AG04450 (cell line): ENCODE measurements at regions of chr10 and their contacts with region 1.

Region 1: DNA sequence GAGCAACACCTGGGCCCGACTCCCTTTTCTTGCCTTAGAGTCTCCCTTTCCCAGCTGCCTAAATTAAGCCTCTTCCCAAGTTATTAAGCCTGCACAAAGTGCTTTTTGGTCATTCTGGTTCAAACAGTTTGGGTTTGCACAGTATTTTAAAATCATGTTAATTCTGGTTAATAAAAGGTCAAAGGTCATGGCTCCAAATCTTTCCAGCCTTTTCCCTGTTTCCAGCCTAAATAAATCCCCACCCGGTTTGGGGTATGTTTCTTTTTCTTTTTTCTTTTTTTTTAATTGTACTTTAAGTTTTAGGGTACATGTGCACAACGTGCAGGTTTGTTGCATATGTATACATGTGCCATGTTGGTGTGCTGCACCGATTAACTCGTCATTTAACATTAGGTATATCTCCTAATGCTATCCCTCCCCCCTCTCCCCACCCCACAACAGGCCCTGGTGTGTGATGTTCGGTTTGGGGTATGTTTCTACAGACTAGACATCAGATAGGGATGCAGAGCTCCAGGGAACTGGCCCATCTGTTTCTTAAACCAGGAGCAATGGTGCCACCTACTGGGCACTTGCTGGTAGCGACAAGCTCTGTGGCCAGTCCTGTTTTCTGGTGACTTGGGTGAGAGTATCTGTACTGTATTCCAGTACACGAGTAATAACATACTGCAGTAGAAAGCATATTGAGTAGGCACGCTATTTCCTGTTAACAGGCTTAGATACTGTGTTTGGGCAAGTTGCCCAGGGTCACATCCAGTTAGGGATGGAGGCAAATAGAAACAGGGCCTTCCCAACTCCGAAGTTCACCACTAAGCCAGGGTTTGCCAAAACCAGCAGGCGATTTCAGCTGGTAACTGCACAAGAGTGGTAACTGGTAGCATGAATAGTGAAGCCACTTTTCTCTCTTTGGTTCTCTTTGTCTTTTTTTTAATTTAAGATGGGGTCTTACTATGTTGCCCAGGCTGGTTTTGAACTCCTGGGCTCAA is 60.6 kb upstream of the TRIM8 start:
- DNase-seq: peak; percentile 85
- H3K4me3 ChIP-seq: no peak overlapping the region
- H3K27ac ChIP-seq: no peak overlapping the region
- H3K27me3 ChIP-seq: no peaks in the 10 kb centered on the region
- CTCF ChIP-seq: peak; percentile 86

Region 2: GRCh38 chr10:102175415-102175814 is 408.3 kb before region 1 on chr10:
- CTCF ChIA-PET with region 1: interaction called, 11 read pairs
- POLR2A ChIA-PET with region 1: no interaction called
- DNase-seq: peak; percentile 37
- H3K4me3 ChIP-seq: no peak overlapping the region
- H3K27ac ChIP-seq: peak overlapping the region; percentile 33
- H3K27me3 ChIP-seq: no peaks in the 10 kb centered on the region
- CTCF ChIP-seq: no peak

Region 3: DNA sequence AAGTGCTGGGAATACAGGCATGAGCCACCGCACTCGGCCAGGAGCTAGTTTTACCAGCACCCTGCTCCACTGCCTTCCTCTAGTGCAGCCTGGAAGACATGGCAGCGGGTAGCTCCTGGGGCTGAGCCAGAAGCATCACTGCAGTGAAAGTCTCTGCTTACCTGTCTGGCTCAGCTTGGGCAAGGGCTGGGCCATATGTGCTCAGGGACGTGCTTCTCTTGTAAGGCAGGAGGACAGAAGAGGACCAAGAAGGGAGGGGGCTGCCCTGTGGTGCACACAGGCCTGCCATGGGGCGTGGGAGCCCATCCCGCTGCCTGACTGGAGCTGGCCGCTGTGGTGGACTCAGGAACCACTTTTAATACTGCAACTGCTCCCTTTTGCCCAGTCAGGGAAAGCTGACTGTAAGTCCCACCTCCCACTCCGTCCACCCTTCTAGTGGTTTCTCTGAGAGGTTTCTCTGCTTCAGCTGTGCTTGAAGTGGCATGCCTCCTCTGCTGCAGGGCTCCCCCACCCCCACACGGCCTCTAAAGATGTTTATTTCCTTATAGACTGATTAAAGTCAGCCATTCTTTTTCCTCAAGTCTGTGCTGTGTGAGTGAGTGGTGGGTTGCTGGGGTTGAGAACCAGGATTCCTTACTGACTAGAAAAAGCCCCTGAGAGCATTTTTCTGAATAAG is 107.1 kb before region 1 on chr10:
- CTCF ChIA-PET with region 1: interaction called, 26 read pairs
- POLR2A ChIA-PET with region 1: interaction called, 4 read pairs
- DNase-seq: no peak
- H3K4me3 ChIP-seq: no peak overlapping the region
- H3K27ac ChIP-seq: no peak overlapping the region
- H3K27me3 ChIP-seq: no peaks in the 10 kb centered on the region
- CTCF ChIP-seq: no peak

Region 4: GRCh38 chr10:102497545-102497944 is 86.2 kb before region 1 on chr10:
- CTCF ChIA-PET with region 1: interaction called, 120 read pairs
- POLR2A ChIA-PET with region 1: interaction called, 12 read pairs
- DNase-seq: no peak
- H3K4me3 ChIP-seq: no peak overlapping the region
- H3K27ac ChIP-seq: no peak overlapping the region
- H3K27me3 ChIP-seq: no peaks in the 10 kb centered on the region
- CTCF ChIP-seq: no peak

Region 5: DNA sequence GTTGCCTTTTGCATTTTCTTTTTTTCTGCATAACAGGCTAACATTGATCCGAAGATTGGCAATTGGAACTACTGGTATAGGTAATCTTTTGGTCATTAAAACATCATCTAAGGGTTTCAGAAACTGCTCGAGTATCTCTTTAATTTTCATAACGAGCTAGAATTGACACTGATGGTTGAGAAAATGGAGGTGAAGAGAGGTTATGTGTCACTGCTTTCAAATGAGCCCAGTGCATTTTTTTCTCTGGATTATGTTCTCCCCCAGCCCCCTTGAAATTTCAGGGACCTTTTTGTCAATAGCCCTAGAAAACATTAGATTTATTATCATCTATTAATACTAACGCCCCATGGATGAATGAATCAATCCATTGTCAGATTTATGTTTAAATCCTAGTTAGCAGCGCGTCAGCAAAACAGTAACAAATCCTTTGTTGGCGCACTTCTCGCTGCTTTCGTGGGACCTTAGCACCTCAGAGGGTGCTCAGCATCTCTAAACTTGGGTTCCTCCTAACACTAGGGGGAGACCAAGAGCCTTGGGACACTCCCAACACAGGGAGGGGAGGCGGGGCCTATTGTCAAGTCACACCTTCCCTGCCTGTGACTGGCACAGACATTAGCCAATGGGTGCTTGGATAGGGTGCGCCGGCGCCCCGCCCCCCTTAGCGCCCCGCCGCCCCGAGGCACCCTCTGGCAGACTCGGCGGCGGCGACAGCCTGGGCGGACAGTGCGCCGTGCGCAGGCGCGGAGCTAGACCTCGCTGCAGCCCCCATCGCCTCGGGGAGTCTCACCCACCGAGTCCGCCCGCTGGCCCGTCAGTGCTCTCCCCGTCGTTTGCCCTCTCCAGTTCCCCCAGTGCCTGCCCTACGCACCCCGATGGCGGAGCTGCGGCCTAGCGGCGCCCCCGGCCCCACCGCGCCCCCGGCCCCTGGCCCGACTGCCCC is 80.2 kb before region 1 on chr10 and contains the start of gene SUFU:
- CTCF ChIA-PET with region 1: interaction called, 120 read pairs
- POLR2A ChIA-PET with region 1: interaction called, 12 read pairs
- DNase-seq: peak; percentile 98
- H3K4me3 ChIP-seq: peak within 1 kb of the TSS; percentile 98
- H3K27ac ChIP-seq: peak within 1 kb of the TSS; percentile 39
- H3K27me3 ChIP-seq: no peaks in the 10 kb centered on the region
- CTCF ChIP-seq: peak; percentile 95
- polyA plus RNA-seq, gene SUFU: 11.0 and 13.2 TPM in 2 replicates

Region 6: GRCh38 chr10:102509387-102509786 is 74.3 kb before region 1 on chr10:
- CTCF ChIA-PET with region 1: interaction called, 120 read pairs
- POLR2A ChIA-PET with region 1: interaction called, 12 read pairs
- DNase-seq: no peak
- H3K4me3 ChIP-seq: no peak overlapping the region
- H3K27ac ChIP-seq: peak overlapping the region; percentile 52
- H3K27me3 ChIP-seq: no peaks in the 10 kb centered on the region
- CTCF ChIP-seq: no peak

Region 7: GRCh38 chr10:102517553-102517952 is 66.2 kb before region 1 on chr10:
- CTCF ChIA-PET with region 1: interaction called, 10 read pairs
- POLR2A ChIA-PET with region 1: no interaction called
- DNase-seq: peak; percentile 44
- H3K4me3 ChIP-seq: no peak overlapping the region
- H3K27ac ChIP-seq: no peak overlapping the region
- H3K27me3 ChIP-seq: no peaks in the 10 kb centered on the region
- CTCF ChIP-seq: no peak

Region 8: GRCh38 chr10:102669206-102670064 is 85.7 kb after region 1 on chr10:
- CTCF ChIA-PET with region 1: no interaction called
- POLR2A ChIA-PET with region 1: no interaction called
- DNase-seq: no peak
- H3K4me3 ChIP-seq: no peak overlapping the region
- H3K27ac ChIP-seq: no peak overlapping the region
- H3K27me3 ChIP-seq: no peaks in the 10 kb centered on the region
- CTCF ChIP-seq: peak; percentile 41

Region 9: GRCh38 chr10:102835007-102835482 is 251.3 kb after region 1 on chr10:
- CTCF ChIA-PET with region 1: no interaction called
- POLR2A ChIA-PET with region 1: no interaction called
- DNase-seq: peak; percentile 59
- H3K4me3 ChIP-seq: no peak overlapping the region
- H3K27ac ChIP-seq: no peak overlapping the region
- H3K27me3 ChIP-seq: peaks cover 2% of the 10 kb centered on the region
- CTCF ChIP-seq: peak; percentile 92